ENCODE measurements at regions of chr6 and their contacts with region 1.

Region 1: DNA sequence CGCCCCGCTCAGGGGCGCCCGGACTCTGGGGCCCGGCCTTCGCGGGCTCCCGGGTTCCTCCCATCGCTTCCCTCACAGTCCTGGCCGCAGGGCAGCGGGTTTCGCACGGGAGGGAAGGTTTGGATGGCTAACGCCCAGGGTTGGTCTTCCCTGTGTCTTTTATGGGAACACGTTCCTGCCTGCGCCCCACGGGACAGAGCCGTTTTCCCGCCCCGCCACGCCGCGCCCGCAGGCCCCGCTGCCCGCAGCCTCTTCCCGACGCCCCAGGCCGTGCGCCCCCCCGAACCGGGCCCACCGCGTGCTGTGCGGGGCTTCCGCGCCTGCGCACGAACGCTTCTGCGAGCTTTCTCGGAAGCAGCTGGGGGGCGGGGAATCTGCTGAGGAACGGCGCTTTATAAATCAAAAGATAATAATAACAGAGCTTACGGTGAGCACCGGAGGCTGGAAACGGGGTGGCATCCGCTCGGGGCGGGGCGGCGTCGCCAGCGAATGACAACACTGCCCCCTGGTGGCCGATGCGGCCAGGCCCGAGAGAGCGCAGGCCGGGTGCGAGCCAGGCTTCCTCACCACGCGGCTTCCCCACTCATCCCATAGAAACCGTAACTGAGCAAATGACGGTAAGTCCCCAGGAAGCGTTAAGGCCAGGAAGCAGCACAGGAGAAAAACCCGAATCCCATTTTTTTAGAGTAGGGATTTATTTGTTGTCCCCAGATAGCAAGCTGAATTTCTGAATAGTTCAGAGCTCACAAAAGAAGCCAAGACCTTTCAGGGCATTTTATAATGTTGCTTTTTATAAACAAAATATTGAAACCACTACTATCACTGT is 116.4 kb downstream of the MYLK4 start:
- DNase-seq: peak; percentile 91
- ATAC-seq: peak; percentile 99
- H3K4me3 Mint-ChIP-seq: peak overlapping the region; percentile 50
- H3K27ac Mint-ChIP-seq: peak overlapping the region; percentile 48
- H3K4me1 Mint-ChIP-seq: peaks cover 8% of the 10 kb centered on the region
- H3K27me3 Mint-ChIP-seq: peaks cover 8% of the 10 kb centered on the region

Region 2: GRCh38 chr6:1604158-1605030 is 1030.0 kb before region 1 on chr6:
- CTCF ChIA-PET with region 1: interaction called, 3 read pairs
- POLR2A ChIA-PET with region 1: no interaction called
- intact Hi-C with region 1: loop called (anchors 1 to 2 kb)
- DNase-seq: peak; percentile 82
- ATAC-seq: peak; percentile 84
- H3K4me3 Mint-ChIP-seq: no peak overlapping the region
- H3K27ac Mint-ChIP-seq: no peak overlapping the region
- H3K4me1 Mint-ChIP-seq: peaks cover 30% of the 10 kb centered on the region
- H3K27me3 Mint-ChIP-seq: peaks cover 77% of the 10 kb centered on the region

Region 3: DNA sequence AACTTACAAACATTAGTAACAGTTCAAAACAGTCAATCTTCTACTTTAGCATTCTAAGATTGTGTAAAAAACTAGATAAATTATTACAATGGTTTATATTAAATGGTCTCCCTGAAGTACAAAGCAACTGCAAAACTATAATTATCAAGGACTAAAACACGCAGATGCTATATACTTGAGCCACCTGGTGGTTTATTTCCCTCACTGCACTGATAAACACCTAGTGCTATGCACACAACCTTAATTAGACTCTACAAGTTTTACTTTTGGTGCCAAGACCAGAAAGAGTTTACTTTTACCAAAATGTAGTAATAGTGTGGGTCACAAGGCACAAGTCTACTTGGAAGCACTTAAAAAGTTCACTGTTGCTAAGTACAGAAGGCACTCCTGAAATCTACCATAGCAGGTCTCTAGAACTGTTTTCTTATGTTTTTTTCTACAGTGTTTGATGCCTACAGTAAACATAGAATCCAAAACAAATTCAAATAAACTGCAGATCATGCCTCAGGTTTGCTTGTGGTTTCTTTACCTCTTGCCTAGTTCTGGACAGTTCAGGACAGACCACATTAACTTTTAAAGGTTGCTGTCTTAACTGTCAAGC is 438.2 kb before region 1 on chr6:
- CTCF ChIA-PET with region 1: interaction called, 4 read pairs
- POLR2A ChIA-PET with region 1: no interaction called
- intact Hi-C with region 1: loop called in 1 of 2 experiments (anchors 10 kb)
- DNase-seq: peak; percentile 34
- ATAC-seq: peak; percentile 76
- H3K4me3 Mint-ChIP-seq: no peak overlapping the region
- H3K27ac Mint-ChIP-seq: no peak overlapping the region
- H3K4me1 Mint-ChIP-seq: no peaks in the 10 kb centered on the region
- H3K27me3 Mint-ChIP-seq: peaks cover 2% of the 10 kb centered on the region

Region 4: DNA sequence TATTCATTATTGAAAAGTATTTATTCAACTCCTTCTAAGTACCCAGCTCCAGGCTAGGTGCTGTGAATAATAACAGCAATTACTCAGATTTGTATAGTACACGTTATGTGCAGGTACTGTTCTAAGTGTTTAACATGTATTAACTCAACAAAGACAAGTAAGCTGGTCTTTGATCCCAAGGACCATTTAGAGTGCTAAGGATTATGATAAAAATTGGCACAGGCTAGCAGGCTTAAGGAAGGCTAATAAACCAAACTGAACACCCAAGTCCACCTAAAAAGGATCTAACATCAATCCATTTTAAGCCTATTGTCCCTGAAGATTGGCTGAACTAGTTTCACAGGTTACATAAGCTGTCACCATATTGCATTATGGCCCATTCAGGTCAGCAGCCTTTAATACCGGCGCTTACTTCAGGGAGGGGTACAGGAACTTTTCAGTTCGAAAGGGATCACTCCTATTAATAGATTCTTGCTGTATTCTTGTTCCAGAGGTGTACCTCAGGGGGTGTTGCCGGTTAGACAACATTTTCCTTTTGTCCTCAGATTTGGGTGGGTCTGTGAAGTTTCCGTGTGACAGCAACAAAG is 289.9 kb before region 1 on chr6:
- CTCF ChIA-PET with region 1: no interaction called
- POLR2A ChIA-PET with region 1: no interaction called
- intact Hi-C with region 1: no loop called
- DNase-seq: no peak
- ATAC-seq: no peak
- H3K4me3 Mint-ChIP-seq: no peak overlapping the region
- H3K27ac Mint-ChIP-seq: no peak overlapping the region
- H3K4me1 Mint-ChIP-seq: no peaks in the 10 kb centered on the region
- H3K27me3 Mint-ChIP-seq: no peaks in the 10 kb centered on the region

Region 5: GRCh38 chr6:2448820-2449571 is 185.4 kb before region 1 on chr6:
- CTCF ChIA-PET with region 1: interaction called, 11 read pairs
- POLR2A ChIA-PET with region 1: no interaction called
- intact Hi-C with region 1: loop called in 1 of 2 experiments (anchors 1 kb)
- DNase-seq: peak; percentile 41
- ATAC-seq: peak; percentile 23
- H3K4me3 Mint-ChIP-seq: peak overlapping the region; percentile 24
- H3K27ac Mint-ChIP-seq: no peak overlapping the region
- H3K4me1 Mint-ChIP-seq: peaks cover 3% of the 10 kb centered on the region
- H3K27me3 Mint-ChIP-seq: peaks cover 5% of the 10 kb centered on the region

Region 6: GRCh38 chr6:2646346-2646745 is 12.0 kb after region 1 on chr6:
- CTCF ChIA-PET with region 1: interaction called, 27 read pairs
- POLR2A ChIA-PET with region 1: no interaction called
- intact Hi-C with region 1: no loop called
- DNase-seq: no peak
- ATAC-seq: no peak
- H3K4me3 Mint-ChIP-seq: no peak overlapping the region
- H3K27ac Mint-ChIP-seq: no peak overlapping the region
- H3K4me1 Mint-ChIP-seq: no peaks in the 10 kb centered on the region
- H3K27me3 Mint-ChIP-seq: peaks cover 32% of the 10 kb centered on the region

Measured in activated CD4-positive, alpha-beta T cell treated with anti-CD3 and anti-CD28 coated beads for 36 hours (primary cell).